BJ (cell line): ENCODE measurements at regions of chr12 and their contacts with region 1.

Region 1: DNA sequence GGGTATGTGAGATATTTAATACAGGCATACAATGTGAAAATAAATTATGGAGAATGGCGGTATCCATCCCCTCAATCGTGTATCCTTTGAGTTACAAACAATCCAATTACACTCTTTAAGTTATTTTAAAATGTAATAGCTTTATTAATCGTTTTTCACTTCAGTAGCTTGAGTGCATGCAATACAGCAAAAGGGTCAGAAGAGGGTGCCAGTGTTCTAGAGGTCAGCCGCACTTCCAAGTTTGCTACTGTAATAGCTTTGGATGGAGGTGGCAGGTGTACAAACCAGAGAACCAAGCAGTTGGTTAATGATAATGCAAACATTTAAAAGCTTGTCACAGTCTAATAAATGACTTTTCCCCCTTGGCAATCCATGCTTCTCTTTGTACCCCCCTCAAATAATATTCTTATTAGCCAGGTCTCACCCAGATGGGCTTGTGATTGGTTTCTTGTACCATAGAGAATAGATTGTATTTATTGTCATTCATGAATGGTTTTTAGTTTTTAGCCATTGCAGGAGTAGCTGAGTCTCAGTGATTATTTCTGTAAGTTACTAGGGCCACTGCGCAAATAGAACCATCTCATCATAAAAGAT is 127.0 kb downstream of the ERC1 start:
- DNase-seq: no peak
- H3K4me3 ChIP-seq: no peak overlapping the region
- H3K27me3 ChIP-seq: no peaks in the 10 kb centered on the region
- CTCF ChIP-seq: peak; percentile 88

Region 2: GRCh38 chr12:1147821-1148220 is 29.8 kb after region 1 on chr12:
- CTCF ChIA-PET with region 1: interaction called, 11 read pairs
- POLR2A ChIA-PET with region 1: no interaction called
- DNase-seq: no peak
- H3K4me3 ChIP-seq: no peak overlapping the region
- H3K27me3 ChIP-seq: no peaks in the 10 kb centered on the region
- CTCF ChIP-seq: no peak

Region 3: GRCh38 chr12:1544996-1545700 is 427.1 kb after region 1 on chr12:
- CTCF ChIA-PET with region 1: interaction called, 23 read pairs
- POLR2A ChIA-PET with region 1: no interaction called
- DNase-seq: no peak
- H3K4me3 ChIP-seq: no peak overlapping the region
- H3K27me3 ChIP-seq: no peaks in the 10 kb centered on the region
- CTCF ChIP-seq: peak; percentile 36

Region 4: DNA sequence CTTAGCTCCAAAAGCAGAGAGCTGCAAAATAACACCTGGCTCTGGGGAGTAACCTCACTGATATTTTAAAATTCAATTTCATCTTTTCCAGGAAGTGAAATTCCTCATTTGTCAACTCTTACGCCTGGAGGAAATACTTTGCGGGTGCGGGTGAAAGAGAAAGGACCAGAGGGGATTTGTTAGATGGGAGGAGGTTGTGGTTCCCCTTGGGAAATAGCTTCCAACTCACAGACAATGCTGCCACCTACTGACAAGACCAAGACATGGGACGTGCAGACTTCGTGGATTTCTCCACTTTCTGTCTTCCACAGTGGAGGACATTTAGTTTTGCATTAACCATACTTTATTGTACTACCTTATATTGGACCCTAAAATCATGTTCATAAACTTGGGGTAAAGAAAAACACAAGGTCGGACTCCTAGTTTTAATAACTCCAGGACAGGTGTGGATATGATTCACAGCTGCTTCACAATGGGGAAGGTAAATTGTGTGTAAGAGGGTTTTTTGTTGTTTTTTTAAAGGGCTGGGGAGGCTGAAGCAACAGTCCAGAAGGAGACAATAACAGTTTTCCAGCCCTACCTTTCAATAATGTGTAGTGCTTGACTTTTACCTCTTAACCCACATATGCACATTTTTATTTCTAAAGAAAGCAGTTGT is 465.5 kb after region 1 on chr12:
- CTCF ChIA-PET with region 1: interaction called, 85 read pairs
- POLR2A ChIA-PET with region 1: no interaction called
- DNase-seq: no peak
- H3K4me3 ChIP-seq: no peak overlapping the region
- H3K27me3 ChIP-seq: no peaks in the 10 kb centered on the region
- CTCF ChIP-seq: peak; percentile 79

Region 5: DNA sequence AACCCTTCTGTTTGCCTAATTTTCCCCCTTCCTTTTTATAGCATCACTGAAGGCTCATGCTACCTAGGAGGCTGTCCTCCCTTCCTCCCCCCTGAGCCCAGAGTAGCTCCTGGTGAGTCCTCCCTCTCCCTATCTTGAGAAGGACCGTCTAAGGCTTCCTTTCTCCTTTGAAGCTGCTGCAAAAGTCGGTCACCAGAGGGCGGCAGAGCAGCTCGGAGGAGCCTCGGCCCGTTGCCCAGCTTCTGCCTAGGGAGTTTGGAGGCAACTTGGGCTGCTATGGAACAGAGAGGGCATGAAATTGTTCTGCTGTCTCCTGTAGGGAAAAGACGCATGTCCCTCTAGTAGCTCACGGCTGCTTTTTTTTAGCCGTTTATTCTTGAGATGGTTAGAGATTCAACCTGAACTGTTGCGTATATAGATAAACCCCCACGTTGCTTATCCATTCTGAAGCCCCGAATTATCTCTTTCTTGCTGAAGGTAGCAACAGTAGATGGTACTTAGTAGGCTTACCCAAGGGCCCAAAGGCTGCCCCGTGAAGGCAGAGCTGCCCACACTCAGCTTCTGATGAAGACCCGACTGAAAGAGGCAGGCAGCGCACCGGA is 516.6 kb after region 1 on chr12:
- CTCF ChIA-PET with region 1: interaction called, 14 read pairs
- POLR2A ChIA-PET with region 1: no interaction called
- DNase-seq: no peak
- H3K4me3 ChIP-seq: no peak overlapping the region
- H3K27me3 ChIP-seq: no peaks in the 10 kb centered on the region
- CTCF ChIP-seq: peak; percentile 95